Activated CD4-positive, alpha-beta T cell treated with anti-CD3 and anti-CD28 coated beads, Interleukin-2, amount 10 ng/mL, durations not matched to agents 7 days and 5 days (primary cell): ENCODE measurements at regions of chr14 and their contacts with region 1.

Region 1: DNA sequence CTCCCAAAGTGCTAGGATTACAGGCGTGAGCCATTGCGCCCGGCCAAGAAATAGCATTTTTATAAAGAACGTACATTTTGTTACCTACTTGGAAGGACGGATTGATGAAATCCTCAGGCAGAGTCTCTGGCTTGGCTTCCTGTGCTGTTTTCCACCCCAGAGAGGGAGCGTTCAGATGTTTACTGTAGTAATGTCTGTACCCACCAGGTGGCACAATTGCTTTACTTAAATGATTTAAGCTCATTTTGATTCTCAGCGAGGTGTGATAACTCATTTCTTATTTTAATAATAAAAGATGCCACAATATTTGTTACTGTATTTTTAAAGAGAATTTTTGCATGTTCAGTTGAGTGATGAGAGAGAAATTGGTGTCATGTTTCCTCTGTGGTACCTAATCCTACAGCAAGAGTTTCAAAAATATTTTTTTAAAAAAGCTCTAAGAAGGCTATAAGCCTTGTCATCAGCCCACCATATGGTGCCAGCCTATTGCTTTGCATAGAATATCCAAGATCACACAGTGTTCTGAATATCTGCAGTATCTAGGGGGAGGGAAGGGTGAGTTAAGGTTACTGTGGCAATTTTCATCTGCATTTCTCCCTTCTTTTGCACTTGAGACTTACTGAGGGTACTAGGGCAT is 82.6 kb upstream of the TRAF3 start:
- DNase-seq: peak; percentile 76
- H3K4me3 Mint-ChIP-seq: no peak overlapping the region
- H3K27ac Mint-ChIP-seq: no peak overlapping the region
- H3K4me1 Mint-ChIP-seq: peaks cover 21% of the 10 kb centered on the region
- H3K27me3 Mint-ChIP-seq: no peaks in the 10 kb centered on the region

Region 2: DNA sequence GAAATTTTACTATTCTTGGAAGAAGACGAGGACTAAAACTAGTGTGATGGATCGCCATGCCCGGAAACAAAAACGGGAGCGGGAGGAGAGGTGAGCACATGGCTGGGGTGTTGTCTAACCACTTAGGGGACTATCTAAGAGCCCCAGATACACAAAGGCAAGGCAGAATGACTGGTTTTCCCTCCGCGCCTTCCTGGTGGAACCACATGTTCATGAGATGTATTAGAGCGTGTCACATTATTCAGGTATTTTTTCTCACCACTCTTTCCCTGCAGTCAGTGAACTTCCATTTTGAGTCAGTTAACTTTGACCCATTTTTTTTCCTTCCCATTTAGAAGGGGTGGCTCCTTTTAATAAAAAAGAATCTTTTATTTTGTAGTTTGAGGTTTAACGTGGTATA is 13.8 kb after region 1 on chr14:
- CTCF ChIA-PET with region 1: interaction called, 14 read pairs
- POLR2A ChIA-PET with region 1: no interaction called
- DNase-seq: no peak
- H3K4me3 Mint-ChIP-seq: no peak overlapping the region
- H3K27ac Mint-ChIP-seq: no peak overlapping the region
- H3K4me1 Mint-ChIP-seq: no peaks in the 10 kb centered on the region
- H3K27me3 Mint-ChIP-seq: no peaks in the 10 kb centered on the region

Region 3: GRCh38 chr14:102849526-102850379 is 155.1 kb after region 1 on chr14:
- CTCF ChIA-PET with region 1: no interaction called
- POLR2A ChIA-PET with region 1: no interaction called
- DNase-seq: no peak
- H3K4me3 Mint-ChIP-seq: no peak overlapping the region
- H3K27ac Mint-ChIP-seq: peak overlapping the region; percentile 38
- H3K4me1 Mint-ChIP-seq: peaks cover 22% of the 10 kb centered on the region
- H3K27me3 Mint-ChIP-seq: no peaks in the 10 kb centered on the region